ENCODE measurements at regions of chr17 and their contacts with region 1.

Region 1: GRCh38 chr17:82297714-82298537 is 19.5 kb downstream of the CD7 start:
- DNase-seq: peak; percentile 63
- H3K4me3 ChIP-seq: peak overlapping the region; percentile 49
- CTCF ChIP-seq: no peak

Region 2: GRCh38 chr17:81898141-81898866 is 399.6 kb before region 1 on chr17:
- CTCF ChIA-PET with region 1: no interaction called
- POLR2A ChIA-PET with region 1: no interaction called
- DNase-seq: peak; percentile 69
- H3K4me3 ChIP-seq: no peak overlapping the region
- CTCF ChIP-seq: no peak

Region 3: GRCh38 chr17:82263641-82264040 is 34.3 kb before region 1 on chr17:
- CTCF ChIA-PET with region 1: no interaction called
- POLR2A ChIA-PET with region 1: no interaction called
- DNase-seq: no peak
- H3K4me3 ChIP-seq: no peak overlapping the region
- CTCF ChIP-seq: no peak

Region 4: DNA sequence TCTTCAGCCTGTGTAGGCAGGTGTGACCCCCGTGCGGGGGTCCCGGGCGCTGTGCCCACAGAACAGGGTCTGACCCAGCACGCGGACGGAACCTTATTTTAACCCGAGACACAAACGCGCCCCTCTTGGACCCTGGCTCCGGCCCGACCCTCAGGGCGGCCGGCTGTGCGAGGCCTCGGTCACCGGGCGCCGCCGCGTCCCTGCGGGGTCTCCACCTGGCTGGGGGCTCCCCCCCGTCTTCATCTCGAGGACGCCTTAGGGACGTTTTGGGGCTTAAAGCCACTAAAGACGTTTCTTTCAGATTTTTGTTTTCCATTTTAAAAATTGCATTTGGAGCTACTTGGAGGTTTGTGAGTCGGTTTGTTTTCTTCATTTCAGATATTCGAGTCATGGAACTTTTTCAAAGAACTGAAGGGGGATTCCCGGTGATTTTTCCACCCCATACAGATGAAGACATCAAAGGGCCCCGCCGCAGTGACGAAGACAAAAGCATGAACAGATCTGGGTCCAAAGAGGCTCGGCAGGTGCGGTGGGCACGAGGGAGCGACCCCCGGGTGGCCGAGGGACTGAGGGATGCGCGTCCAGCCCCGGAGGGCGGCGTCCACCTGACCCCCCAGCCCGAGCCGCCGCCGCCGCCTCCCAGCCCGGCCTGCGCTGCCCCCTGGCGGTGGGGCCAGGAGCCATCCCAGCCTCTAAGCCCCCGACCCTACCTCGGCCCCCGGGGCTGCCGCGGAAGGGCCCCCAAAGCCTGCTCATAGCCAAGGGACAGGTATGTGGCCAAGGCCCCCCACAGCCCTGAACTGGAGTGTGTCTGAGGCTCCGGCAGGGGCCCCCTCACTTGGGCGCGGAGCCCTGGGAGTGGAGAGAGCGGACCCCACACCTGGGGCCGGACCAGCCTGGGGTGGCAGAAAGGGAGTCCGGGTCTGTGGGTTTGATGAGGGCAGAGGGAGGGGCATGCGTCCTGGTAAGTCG is 23.3 kb after region 1 on chr17:
- CTCF ChIA-PET with region 1: interaction called, 18 read pairs
- POLR2A ChIA-PET with region 1: no interaction called
- DNase-seq: no peak
- H3K4me3 ChIP-seq: no peak overlapping the region
- CTCF ChIP-seq: peak; percentile 63

Region 5: GRCh38 chr17:82338858-82339633 is 41.1 kb after region 1 on chr17:
- CTCF ChIA-PET with region 1: interaction called, 13 read pairs
- POLR2A ChIA-PET with region 1: interaction called, 3 read pairs
- DNase-seq: no peak
- H3K4me3 ChIP-seq: peak overlapping the region; percentile 12; the same call in 1 of the 2 replicates
- CTCF ChIP-seq: no peak

Region 6: DNA sequence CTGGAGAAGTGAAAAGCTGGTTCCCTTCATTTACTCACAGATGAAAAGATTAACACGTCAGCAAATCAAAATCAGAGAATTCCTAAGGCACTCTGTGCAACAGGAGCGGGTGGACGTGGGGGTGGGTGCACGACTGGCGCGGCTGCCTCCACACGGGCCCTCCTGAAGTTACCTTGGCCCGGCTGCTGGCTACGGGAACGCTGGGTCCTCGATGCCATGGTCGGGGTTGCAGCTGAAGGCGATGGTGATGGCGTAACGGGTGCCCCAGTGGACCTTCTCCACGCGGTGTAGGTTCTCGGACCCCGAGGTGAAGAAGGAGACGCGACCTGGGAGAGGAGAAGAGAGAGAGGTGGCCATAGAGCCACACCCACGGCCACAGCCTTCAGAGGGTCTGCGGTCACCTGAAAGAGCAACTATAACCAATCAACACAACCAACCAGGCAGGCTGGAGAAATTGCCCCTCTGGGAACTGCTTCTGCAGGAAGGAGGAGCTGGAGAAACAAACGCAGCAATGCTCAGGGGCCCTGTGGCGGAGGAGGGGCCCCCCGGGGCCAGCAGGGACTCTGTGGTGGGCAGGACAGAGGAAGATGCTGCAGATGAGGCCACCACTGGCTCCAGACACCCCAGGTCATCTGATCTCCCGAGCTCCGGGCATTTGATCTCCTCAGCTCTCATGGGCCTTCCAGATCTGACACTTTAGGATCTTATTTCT is 94.4 kb after region 1 on chr17:
- CTCF ChIA-PET with region 1: no interaction called
- POLR2A ChIA-PET with region 1: no interaction called
- DNase-seq: no peak
- H3K4me3 ChIP-seq: no peak overlapping the region
- CTCF ChIP-seq: no peak

Measured in AG04449 (cell line).